PC-9 (cell line): ENCODE measurements at regions of chr11 and their contacts with region 1.

Region 1: GRCh38 chr11:2569321-2569721 is 124.5 kb downstream of the KCNQ1 start:
- DNase-seq: no peak
- H3K4me3 ChIP-seq: no peak overlapping the region
- H3K27ac ChIP-seq: no peak overlapping the region
- H3K4me1 ChIP-seq: no peaks in the 10 kb centered on the region
- H3K27me3 ChIP-seq: no peaks in the 10 kb centered on the region
- CTCF ChIP-seq: no peak

Region 2: GRCh38 chr11:2526808-2527381 is 42.4 kb before region 1 on chr11:
- CTCF ChIA-PET with region 1: no interaction called
- POLR2A ChIA-PET with region 1: no interaction called
- intact Hi-C with region 1: no loop called
- DNase-seq: no peak
- H3K4me3 ChIP-seq: no peak overlapping the region
- H3K27ac ChIP-seq: no peak overlapping the region
- H3K4me1 ChIP-seq: no peaks in the 10 kb centered on the region
- H3K27me3 ChIP-seq: peaks cover 22% of the 10 kb centered on the region
- CTCF ChIP-seq: no peak

Region 3: GRCh38 chr11:2674658-2675131 is 105.4 kb after region 1 on chr11:
- CTCF ChIA-PET with region 1: interaction called, 11 read pairs
- POLR2A ChIA-PET with region 1: no interaction called
- intact Hi-C with region 1: no loop called
- DNase-seq: no peak
- H3K4me3 ChIP-seq: no peak overlapping the region
- H3K27ac ChIP-seq: no peak overlapping the region
- H3K4me1 ChIP-seq: no peaks in the 10 kb centered on the region
- H3K27me3 ChIP-seq: no peaks in the 10 kb centered on the region
- CTCF ChIP-seq: no peak